Activated T-helper 2 cell treated with anti-CD3 and anti-CD28 coated beads, Interferon-gamma antibody, Interleukin-2, Interleukin-4, amounts not matched to agents 10 μg/mL and 5 μg/mL and 100 μg/mL, durations not matched to agents 14 hours and 24 hours and 36 hours (primary cell): ENCODE measurements at regions of chr1 and their contacts with region 1.

Region 1: DNA sequence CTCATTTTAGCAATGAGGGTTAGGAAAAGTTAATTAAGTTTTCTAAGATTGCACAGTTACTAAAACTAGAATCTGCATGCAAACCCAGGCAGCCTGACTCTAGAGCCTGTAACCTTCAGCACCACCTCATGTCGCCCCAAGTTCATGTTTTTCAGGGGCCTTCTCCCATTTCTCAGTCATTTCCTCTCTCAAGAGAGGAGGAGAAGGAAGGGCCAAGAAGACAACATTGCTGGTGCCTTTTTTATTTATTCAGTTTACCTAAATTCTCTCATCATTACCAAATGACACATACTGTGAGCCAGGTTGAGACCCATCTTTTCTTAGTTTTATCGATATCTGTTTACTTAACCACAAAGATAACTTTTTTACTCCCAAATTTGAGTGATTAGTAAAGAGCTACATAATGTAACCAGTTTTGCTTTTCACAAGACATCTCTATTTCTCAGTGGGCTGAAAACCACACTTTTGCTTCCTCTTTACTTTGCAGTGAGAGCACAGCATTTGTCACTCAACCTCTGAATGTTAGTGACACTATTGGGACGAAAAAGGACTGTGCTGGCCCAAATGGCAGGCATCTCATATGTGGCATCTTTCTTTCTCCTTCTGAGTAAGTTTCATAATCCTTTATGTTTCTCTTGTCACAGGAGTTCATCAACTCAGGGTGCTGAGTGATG is at the start of gene CD101:
- DNase-seq: no peak
- H3K4me3 Mint-ChIP-seq: peak within 1 kb of the TSS; percentile 31
- H3K27ac Mint-ChIP-seq: peak within 1 kb of the TSS; percentile 46
- H3K4me1 Mint-ChIP-seq: peaks cover 37% of the 10 kb centered on the region
- H3K27me3 Mint-ChIP-seq: peaks cover 9% of the 10 kb centered on the region
- total RNA-seq, gene CD101: 0.18 and 0.25 TPM in 2 replicates

Region 2: GRCh38 chr1:116873680-116874271 is 127.6 kb before region 1 on chr1:
- intact Hi-C with region 1: loop called (anchors 2 kb)
- DNase-seq: no peak
- H3K4me3 Mint-ChIP-seq: peak overlapping the region; percentile 17
- H3K27ac Mint-ChIP-seq: peak overlapping the region; percentile 36
- H3K4me1 Mint-ChIP-seq: peaks cover 25% of the 10 kb centered on the region
- H3K27me3 Mint-ChIP-seq: peaks cover 2% of the 10 kb centered on the region

Region 3: DNA sequence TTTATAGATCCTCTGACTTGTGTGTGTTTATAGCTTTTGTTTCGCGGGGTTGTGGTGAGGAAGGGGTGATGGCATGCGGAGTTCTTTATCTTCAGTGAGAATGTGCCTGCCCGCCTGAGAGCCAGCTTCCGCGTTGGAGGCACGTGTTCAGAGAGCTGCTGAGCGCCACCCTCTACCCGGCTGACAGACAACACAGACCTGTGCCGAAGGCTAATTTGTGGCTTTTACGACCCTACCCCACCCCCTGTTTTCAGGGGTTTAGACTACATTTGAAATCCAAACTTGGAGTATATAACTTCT is 14.2 kb before region 1 on chr1:
- intact Hi-C with region 1: loop called (anchors 1 kb)
- DNase-seq: peak; percentile 45
- H3K4me3 Mint-ChIP-seq: peak overlapping the region; percentile 80
- H3K27ac Mint-ChIP-seq: peak overlapping the region; percentile 91
- H3K4me1 Mint-ChIP-seq: peaks cover 37% of the 10 kb centered on the region
- H3K27me3 Mint-ChIP-seq: no peaks in the 10 kb centered on the region

Region 4: DNA sequence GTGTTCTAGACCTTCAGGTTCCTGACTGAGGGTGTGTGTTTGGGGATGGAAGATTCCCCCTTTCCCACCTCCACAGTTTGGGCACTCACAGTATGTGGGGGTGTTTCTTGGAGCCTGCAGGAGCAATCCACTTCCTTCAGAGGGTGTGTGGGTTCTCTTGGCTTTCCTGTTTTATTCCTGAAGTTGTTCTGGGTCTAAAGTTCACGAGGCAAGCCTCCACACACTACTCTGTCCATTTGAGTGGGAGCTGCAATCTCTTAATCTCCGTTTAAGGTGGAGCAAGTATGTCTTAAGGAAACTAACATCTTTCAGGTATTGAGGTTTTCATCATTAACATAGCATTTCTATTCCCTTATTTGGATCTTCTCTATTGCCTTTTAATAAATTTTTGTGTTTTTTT is 746.2 kb after region 1 on chr1:
- intact Hi-C with region 1: no loop called
- DNase-seq: no peak
- H3K4me3 Mint-ChIP-seq: no peak overlapping the region
- H3K27ac Mint-ChIP-seq: no peak overlapping the region
- H3K4me1 Mint-ChIP-seq: no peaks in the 10 kb centered on the region
- H3K27me3 Mint-ChIP-seq: peaks cover 33% of the 10 kb centered on the region